Endothelial cell of umbilical vein (primary cell): ENCODE measurements at regions of chr2 and their contacts with region 1.

Region 1: DNA sequence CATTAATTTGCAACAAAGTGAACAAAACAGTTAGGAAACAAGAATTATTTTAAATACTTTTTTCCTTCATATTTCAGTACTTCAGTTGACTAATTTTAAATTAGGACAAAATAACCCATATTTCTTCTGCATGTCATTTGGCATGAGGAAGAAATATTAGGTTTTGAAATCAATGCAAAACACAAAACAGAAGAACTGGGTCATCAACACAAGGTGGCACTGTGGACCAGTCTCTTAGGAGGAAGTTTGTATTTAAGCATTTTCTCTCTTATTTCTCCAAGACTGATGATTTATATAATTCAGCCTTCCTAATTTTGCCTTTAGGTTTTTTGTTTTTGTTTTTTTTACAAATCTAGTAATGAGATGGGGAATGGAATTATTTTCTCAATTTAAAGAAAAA is 352.8 kb upstream of the KCNH7 start:
- DNase-seq: peak; percentile 64
- H3K4me3 ChIP-seq: no peak overlapping the region
- H3K27ac ChIP-seq: no peak overlapping the region
- H3K4me1 ChIP-seq: peaks cover 19% of the 10 kb centered on the region
- H3K27me3 ChIP-seq: no peaks in the 10 kb centered on the region
- CTCF ChIP-seq: peak; percentile 45 to 47
- POLR2A ChIP-seq: no peak

Region 2: DNA sequence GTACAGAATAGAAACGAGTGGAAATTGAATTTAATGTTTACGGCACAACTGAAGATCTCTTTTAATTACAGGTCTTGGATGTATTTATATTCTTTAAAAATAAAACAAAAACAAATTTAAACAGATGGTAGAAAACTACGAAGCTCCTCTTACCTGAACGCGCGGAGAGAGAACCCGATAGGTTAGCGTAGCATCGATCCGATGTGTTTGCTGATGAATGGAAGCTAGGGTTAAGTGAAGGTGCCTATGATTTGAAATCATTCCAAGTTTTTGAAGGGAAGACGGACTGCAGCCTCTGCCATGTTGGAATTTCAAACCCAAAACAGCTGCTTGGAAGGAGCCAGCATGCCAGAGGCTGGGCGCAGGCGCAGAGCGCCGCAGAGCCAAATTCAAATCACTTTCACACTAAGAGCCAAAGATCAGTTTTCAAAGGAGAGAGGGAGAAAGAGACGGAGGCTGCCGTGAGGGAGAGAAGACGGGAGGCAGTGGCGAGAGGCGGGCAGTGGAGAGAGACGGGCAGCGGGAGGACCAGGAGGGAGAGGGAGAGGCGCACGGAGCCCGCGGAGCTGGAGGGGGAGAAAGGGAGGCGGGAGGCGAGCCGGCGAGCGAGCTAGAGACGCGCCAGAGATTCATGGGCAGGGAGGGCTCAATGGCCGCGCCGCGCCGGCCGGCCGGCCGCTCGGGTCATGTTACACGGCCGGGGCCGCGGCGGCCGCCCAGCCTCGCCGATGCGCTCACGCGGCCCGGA is 544.5 kb after region 1 on chr2 and contains the start of gene FIGN:
- CTCF ChIA-PET with region 1: no interaction called
- POLR2A ChIA-PET with region 1: no interaction called
- dilution Hi-C with region 1: no loop called
- intact Hi-C with region 1: loop called (anchors 2 kb)
- DNase-seq: peak; percentile 91
- H3K4me3 ChIP-seq: peak within 1 kb of the TSS; percentile 66 to 96 (median 94)
- H3K27ac ChIP-seq: peak within 1 kb of the TSS; percentile 72
- H3K4me1 ChIP-seq: peaks cover 11% of the 10 kb centered on the region
- H3K27me3 ChIP-seq: no peaks in the 10 kb centered on the region
- CTCF ChIP-seq: no peak
- POLR2A ChIP-seq: peak; percentile 60
- total RNA-seq, gene FIGN: 6.6 and 8.1 TPM in 2 replicates

Region 3: GRCh38 chr2:164061129-164061746 is 869.9 kb after region 1 on chr2:
- CTCF ChIA-PET with region 1: interaction called, 56 read pairs
- POLR2A ChIA-PET with region 1: no interaction called
- dilution Hi-C with region 1: no loop called
- intact Hi-C with region 1: loop called (anchors 1 kb)
- DNase-seq: peak; percentile 61
- H3K4me3 ChIP-seq: no peak overlapping the region
- H3K27ac ChIP-seq: no peak overlapping the region
- H3K4me1 ChIP-seq: no peaks in the 10 kb centered on the region
- H3K27me3 ChIP-seq: no peaks in the 10 kb centered on the region
- CTCF ChIP-seq: peak; percentile 53 to 58
- POLR2A ChIP-seq: no peak

Region 4: GRCh38 chr2:164287056-164287455 is 1095.7 kb after region 1 on chr2:
- CTCF ChIA-PET with region 1: no interaction called
- POLR2A ChIA-PET with region 1: no interaction called
- dilution Hi-C with region 1: no loop called
- intact Hi-C with region 1: no loop called
- DNase-seq: no peak
- H3K4me3 ChIP-seq: no peak overlapping the region
- H3K27ac ChIP-seq: no peak overlapping the region
- H3K4me1 ChIP-seq: no peaks in the 10 kb centered on the region
- H3K27me3 ChIP-seq: no peaks in the 10 kb centered on the region
- CTCF ChIP-seq: no peak
- POLR2A ChIP-seq: no peak

Region 5: GRCh38 chr2:164495491-164496223 is 1304.3 kb after region 1 on chr2:
- CTCF ChIA-PET with region 1: interaction called, 3 read pairs
- POLR2A ChIA-PET with region 1: no interaction called
- dilution Hi-C with region 1: no loop called
- intact Hi-C with region 1: loop called (anchors 1 kb)
- DNase-seq: peak; percentile 44
- H3K4me3 ChIP-seq: no peak overlapping the region
- H3K27ac ChIP-seq: no peak overlapping the region
- H3K4me1 ChIP-seq: peaks cover 7% of the 10 kb centered on the region
- H3K27me3 ChIP-seq: no peaks in the 10 kb centered on the region
- CTCF ChIP-seq: peak; percentile 34 to 41
- POLR2A ChIP-seq: no peak